ENCODE measurements at regions of chr16 and their contacts with region 1.

Region 1: GRCh38 chr16:50368410-50369132 is at the start of gene BRD7:
- DNase-seq: no peak
- H3K4me3 ChIP-seq: peak within 1 kb of the TSS; percentile 77 to 99 (median 98)
- H3K27ac ChIP-seq: peak within 1 kb of the TSS; percentile 77 to 85 (median 82)
- H3K4me1 ChIP-seq: peaks cover 30 to 68% (median 67%) of the 10 kb centered on the region in 4 donors
- H3K27me3 ChIP-seq: no peaks in the 10 kb centered on the region
- CTCF ChIP-seq: peak; percentile 48 to 81 (median 52)
- EP300 ChIP-seq: no peak
- POLR2A ChIP-seq: no peak
- total RNA-seq, gene BRD7: 49.5 to 68.1 (median 56.5) TPM

Region 2: GRCh38 chr16:50152807-50153452 is 215.6 kb before region 1 on chr16 and contains the start of gene TENT4B:
- intact Hi-C with region 1: loop called (anchors 10 kb)
- DNase-seq: peak; percentile 95
- H3K4me3 ChIP-seq: peak within 1 kb of the TSS; percentile 65 to 88 (median 72)
- H3K27ac ChIP-seq: peak within 1 kb of the TSS; percentile 90 to 96 (median 92)
- H3K4me1 ChIP-seq: peaks cover 37 to 45% (median 41%) of the 10 kb centered on the region in 4 donors
- H3K27me3 ChIP-seq: no peaks in the 10 kb centered on the region
- CTCF ChIP-seq: no peak
- EP300 ChIP-seq: no peak
- POLR2A ChIP-seq: peak; percentile 15
- total RNA-seq, gene TENT4B: 9.9 to 18.3 (median 16.7) TPM

Region 3: GRCh38 chr16:50548125-50548908 is 179.7 kb after region 1 on chr16 and contains the start of gene NKD1:
- intact Hi-C with region 1: loop called (anchors 5 kb)
- DNase-seq: no peak
- H3K4me3 ChIP-seq: peak within 1 kb of the TSS; percentile 75 to 97 (median 84)
- H3K27ac ChIP-seq: peak within 1 kb of the TSS; percentile 84 to 90 (median 88)
- H3K4me1 ChIP-seq: peaks cover 7 to 57% (median 56%) of the 10 kb centered on the region in 4 donors
- H3K27me3 ChIP-seq: peaks cover 0 to 5% (median 0%) of the 10 kb centered on the region in 4 donors
- CTCF ChIP-seq: no peak
- EP300 ChIP-seq: no peak
- POLR2A ChIP-seq: no peak
- total RNA-seq, gene NKD1: 37.1 to 87.8 (median 54.1) TPM

Region 4: DNA sequence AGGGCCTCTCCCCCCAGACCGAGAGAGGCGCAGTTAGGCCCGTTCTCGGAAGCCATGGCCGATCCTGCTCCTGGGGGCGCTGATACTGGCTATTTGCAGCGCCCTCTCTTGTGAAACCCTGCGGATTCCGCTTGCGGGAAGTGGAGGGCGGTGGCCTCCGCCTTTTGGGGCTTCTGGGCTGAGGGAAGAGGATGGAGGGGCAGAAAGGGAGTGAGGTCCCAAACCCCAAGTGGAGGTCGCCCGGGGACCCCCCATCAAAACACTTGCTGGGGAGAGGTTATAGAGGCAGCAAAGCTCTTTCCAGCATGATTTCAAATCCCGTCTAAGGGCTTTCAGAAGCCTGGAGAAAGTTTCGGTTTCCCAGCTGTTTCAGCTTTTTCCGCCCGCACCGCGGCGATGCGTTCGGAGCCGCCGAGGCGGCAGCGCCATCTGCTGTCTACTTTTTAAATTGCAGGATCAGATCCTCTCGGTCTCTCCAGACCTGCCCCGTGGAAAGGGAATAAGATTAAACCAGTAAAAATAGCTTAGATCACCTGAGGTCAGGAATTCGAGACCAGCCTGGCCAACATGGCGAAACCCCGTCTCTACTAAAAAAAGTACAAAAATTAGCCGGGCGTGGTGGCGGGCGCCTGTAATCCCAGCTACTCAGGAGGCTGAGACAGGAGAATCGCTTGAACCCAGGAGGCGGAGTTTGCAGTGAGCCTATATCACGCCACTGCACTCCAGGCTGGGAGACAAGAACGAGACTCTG is 296.7 kb after region 1 on chr16:
- intact Hi-C with region 1: loop called (anchors 2 kb)
- DNase-seq: peak; percentile 95
- H3K4me3 ChIP-seq: peak overlapping the region; percentile 52 to 62 (median 59)
- H3K27ac ChIP-seq: peak overlapping the region; percentile 70 to 82 (median 77)
- H3K4me1 ChIP-seq: peaks cover 10 to 31% (median 29%) of the 10 kb centered on the region in 4 donors
- H3K27me3 ChIP-seq: no peaks in the 10 kb centered on the region
- CTCF ChIP-seq: peak; percentile 89 to 90 (median 89)
- EP300 ChIP-seq: no peak
- POLR2A ChIP-seq: no peak